Activated CD4-positive, alpha-beta T cell treated with anti-CD3 and anti-CD28 coated beads for 36 hours (primary cell): ENCODE measurements at regions of chr14 and their contacts with region 1.

Region 1: DNA sequence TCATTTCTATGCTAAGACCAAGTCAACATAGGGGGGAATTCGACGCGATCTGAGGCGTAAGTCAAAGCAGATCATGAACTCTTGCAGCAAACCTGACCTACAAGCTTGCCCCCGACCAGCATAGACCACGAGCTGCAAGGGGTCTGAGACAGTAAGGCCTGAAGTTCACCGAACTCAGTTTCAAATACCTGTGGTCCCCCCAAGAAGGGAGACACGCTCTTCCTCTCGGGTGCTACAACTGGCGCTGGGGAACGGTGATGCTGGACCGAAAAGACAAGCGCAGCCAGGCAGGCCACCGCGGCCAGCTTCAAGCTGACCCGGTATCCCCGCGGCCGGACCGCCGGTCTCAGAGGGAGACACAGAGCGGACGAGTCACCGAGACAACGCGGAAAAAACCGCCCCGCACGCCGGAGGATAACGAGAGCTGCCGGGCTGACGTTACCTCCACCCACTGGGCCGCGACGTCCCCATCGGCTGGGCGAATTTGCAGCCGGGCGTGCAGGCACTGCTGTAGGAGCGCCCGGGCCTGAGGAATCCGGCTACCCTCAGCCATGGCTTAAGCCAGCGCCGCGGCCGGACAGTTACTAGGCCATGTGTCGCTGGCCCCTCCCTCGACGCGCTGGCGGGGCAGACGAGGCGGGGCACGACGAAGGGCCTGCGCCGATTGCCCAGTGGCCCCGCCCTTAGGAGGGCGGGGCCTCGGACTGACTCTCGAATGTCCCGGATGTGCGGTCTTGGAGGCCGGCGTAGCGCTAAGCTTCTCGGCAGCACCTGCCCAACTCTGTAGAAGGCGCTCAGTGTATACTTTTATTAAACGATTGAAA is at the start of gene DTD2:
- DNase-seq: peak; percentile 95
- ATAC-seq: peak; percentile 99
- H3K4me3 Mint-ChIP-seq: peak within 1 kb of the TSS; percentile 98
- H3K27ac Mint-ChIP-seq: peak within 1 kb of the TSS; percentile 95
- H3K4me1 Mint-ChIP-seq: peaks cover 22% of the 10 kb centered on the region
- H3K27me3 Mint-ChIP-seq: peaks cover 2% of the 10 kb centered on the region
- total RNA-seq, gene DTD2: 17.5 to 21.6 TPM

Region 2: GRCh38 chr14:30558675-30559555 is 898.1 kb before region 1 on chr14 and contains the start of gene G2E3:
- CTCF ChIA-PET with region 1: interaction called, 3 read pairs
- POLR2A ChIA-PET with region 1: no interaction called
- intact Hi-C with region 1: loop called in 1 of 2 experiments (anchors 2 kb)
- DNase-seq: peak; percentile 93
- ATAC-seq: peak; percentile 99
- H3K4me3 Mint-ChIP-seq: peak within 1 kb of the TSS; percentile 100
- H3K27ac Mint-ChIP-seq: peak within 1 kb of the TSS; percentile 100
- H3K4me1 Mint-ChIP-seq: peaks cover 33% of the 10 kb centered on the region
- H3K27me3 Mint-ChIP-seq: peaks cover 2% of the 10 kb centered on the region
- total RNA-seq, gene G2E3: 16.9 to 29.6 TPM

Region 3: GRCh38 chr14:31388687-31389413 is 68.2 kb before region 1 on chr14:
- CTCF ChIA-PET with region 1: no interaction called
- POLR2A ChIA-PET with region 1: interaction called, 3 read pairs
- intact Hi-C with region 1: loop called in 1 of 2 experiments (anchors 2 kb)
- DNase-seq: peak; percentile 27
- ATAC-seq: peak; percentile 68
- H3K4me3 Mint-ChIP-seq: no peak overlapping the region
- H3K27ac Mint-ChIP-seq: peak overlapping the region; percentile 75
- H3K4me1 Mint-ChIP-seq: peaks cover 28% of the 10 kb centered on the region
- H3K27me3 Mint-ChIP-seq: no peaks in the 10 kb centered on the region

Region 4: DNA sequence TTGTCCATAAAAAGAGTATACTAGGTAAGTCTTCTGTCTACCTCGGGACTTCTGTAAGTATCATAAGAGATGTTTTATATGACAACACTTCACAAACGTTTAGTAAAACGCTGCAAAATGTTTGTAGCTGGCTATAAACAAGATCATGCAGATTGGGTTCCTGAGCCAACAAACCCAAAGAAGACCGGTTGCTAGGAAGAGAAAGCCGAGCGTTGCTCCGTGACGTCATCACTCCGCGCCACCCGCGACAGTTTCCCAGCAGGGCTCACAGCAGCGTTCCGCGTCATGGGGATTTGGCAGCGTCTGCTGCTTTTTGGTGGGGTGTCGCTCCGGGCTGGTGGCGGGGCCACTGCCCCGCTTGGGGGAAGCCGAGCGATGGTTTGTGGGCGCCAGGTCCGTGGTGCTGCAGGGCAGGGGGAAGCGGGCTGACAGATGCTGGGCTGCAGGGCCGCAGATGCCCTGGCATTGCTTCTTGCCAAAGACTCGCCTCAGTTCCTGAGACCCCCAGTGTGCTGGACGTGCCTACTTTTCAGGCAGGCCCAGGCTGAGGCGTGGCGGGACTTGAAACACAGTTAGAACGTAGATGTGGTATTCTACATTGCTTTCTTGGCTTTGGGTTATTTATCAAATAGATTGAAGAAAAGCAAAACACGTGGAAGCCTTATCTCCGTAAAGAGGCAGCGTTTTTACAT is 104.2 kb after region 1 on chr14 and contains the start of gene NUBPL:
- CTCF ChIA-PET with region 1: no interaction called
- POLR2A ChIA-PET with region 1: no interaction called
- intact Hi-C with region 1: loop called (anchors 1 kb)
- DNase-seq: peak; percentile 98
- ATAC-seq: peak; percentile 96
- H3K4me3 Mint-ChIP-seq: peak within 1 kb of the TSS; percentile 92
- H3K27ac Mint-ChIP-seq: peak within 1 kb of the TSS; percentile 95
- H3K4me1 Mint-ChIP-seq: peaks cover 23% of the 10 kb centered on the region
- H3K27me3 Mint-ChIP-seq: peaks cover 6% of the 10 kb centered on the region
- total RNA-seq, gene NUBPL: 9.5 to 14.9 TPM